Activated CD4-positive, alpha-beta T cell treated with anti-CD3 and anti-CD28 coated beads for 36 hours (primary cell): ENCODE measurements at regions of chr16 and their contacts with region 1.

Region 1: GRCh38 chr16:67806428-67807147 is at the starts of genes RANBP10 and TSNAXIP1:
- DNase-seq: peak; percentile 98
- ATAC-seq: peak; percentile 96
- H3K4me3 Mint-ChIP-seq: peak within 1 kb of the TSS; percentile 91
- H3K27ac Mint-ChIP-seq: peak within 1 kb of the TSS; percentile 91
- H3K4me1 Mint-ChIP-seq: peaks cover 39% of the 10 kb centered on the region
- H3K27me3 Mint-ChIP-seq: no peaks in the 10 kb centered on the region
- total RNA-seq, gene RANBP10: 15.6 to 18.0 TPM
- total RNA-seq, gene TSNAXIP1: 0.62 to 1.1 TPM

Region 2: GRCh38 chr16:67833418-67834241 is 27.0 kb after region 1 on chr16:
- CTCF ChIA-PET with region 1: interaction called, 4 read pairs
- POLR2A ChIA-PET with region 1: interaction called, 9 read pairs
- intact Hi-C with region 1: loop called (anchors 1 kb)
- DNase-seq: peak; percentile 97
- ATAC-seq: peak; percentile 100
- H3K4me3 Mint-ChIP-seq: peak overlapping the region; percentile 87
- H3K27ac Mint-ChIP-seq: peak overlapping the region; percentile 78
- H3K4me1 Mint-ChIP-seq: peaks cover 9% of the 10 kb centered on the region
- H3K27me3 Mint-ChIP-seq: no peaks in the 10 kb centered on the region

Region 3: GRCh38 chr16:67892899-67893742 is 86.5 kb after region 1 on chr16 and contains the start of gene PSKH1:
- CTCF ChIA-PET with region 1: no interaction called
- POLR2A ChIA-PET with region 1: no interaction called
- intact Hi-C with region 1: loop called in 1 of 2 experiments (anchors 1 kb)
- DNase-seq: peak; percentile 97
- ATAC-seq: peak; percentile 99
- H3K4me3 Mint-ChIP-seq: peak within 1 kb of the TSS; percentile 92
- H3K27ac Mint-ChIP-seq: peak within 1 kb of the TSS; percentile 92
- H3K4me1 Mint-ChIP-seq: peaks cover 30% of the 10 kb centered on the region
- H3K27me3 Mint-ChIP-seq: no peaks in the 10 kb centered on the region
- total RNA-seq, gene PSKH1: 11.7 to 11.9 TPM

Region 4: GRCh38 chr16:68022704-68023522 is 216.3 kb after region 1 on chr16 and contains the starts of genes DDX28 and DUS2:
- CTCF ChIA-PET with region 1: no interaction called
- POLR2A ChIA-PET with region 1: interaction called, 3 read pairs
- intact Hi-C with region 1: loop called in 1 of 2 experiments (anchors 2 kb)
- DNase-seq: peak; percentile 95
- ATAC-seq: peak; percentile 89
- H3K4me3 Mint-ChIP-seq: peak within 1 kb of the TSS; percentile 95
- H3K27ac Mint-ChIP-seq: peak within 1 kb of the TSS; percentile 97
- H3K4me1 Mint-ChIP-seq: peaks cover 23% of the 10 kb centered on the region
- H3K27me3 Mint-ChIP-seq: no peaks in the 10 kb centered on the region
- total RNA-seq, gene DDX28: 13.7 to 17.1 TPM
- total RNA-seq, gene DUS2: 29.5 to 33.1 TPM

Region 5: DNA sequence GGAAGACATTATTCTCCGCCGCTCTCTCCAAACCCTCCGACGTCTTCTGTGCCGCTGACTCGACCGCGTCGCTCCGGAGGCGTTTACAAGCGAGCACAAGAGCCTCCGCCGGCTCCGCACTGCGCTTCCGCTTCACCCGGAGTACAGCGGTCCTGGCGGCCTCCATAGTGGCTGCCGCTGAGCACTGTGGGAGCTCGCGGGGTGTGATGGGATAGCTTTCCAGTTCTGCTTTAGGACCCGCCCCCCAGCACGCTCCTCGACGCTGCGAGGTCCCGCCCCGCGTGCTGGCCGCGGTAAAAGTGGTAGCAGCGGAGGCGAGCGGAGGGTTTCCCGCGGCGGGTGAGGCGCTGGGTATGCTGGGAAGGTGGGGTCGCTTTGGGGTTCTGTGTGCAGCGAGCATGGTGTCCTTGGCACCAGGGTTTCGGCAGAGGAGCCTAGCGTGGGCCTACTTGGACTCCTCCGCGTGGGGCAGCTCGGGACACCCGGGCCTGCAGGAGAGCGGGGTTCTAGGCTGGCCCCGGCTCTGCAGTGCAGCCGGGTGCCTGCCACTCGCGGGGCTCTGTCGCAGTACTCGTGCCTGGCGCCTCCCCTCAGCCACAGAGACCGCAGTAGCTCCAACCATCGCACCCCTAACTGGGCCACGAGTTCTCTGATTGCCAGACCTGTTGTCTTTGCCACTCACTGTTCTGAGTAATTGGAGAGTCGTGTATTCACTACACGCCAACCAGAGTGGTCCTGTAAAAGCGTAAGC is 504.3 kb after region 1 on chr16 and contains the starts of genes PRMT7 and SLC7A6OS:
- CTCF ChIA-PET with region 1: no interaction called
- POLR2A ChIA-PET with region 1: no interaction called
- intact Hi-C with region 1: loop called in 1 of 2 experiments (anchors 2 kb)
- DNase-seq: peak; percentile 97
- ATAC-seq: peak; percentile 99
- H3K4me3 Mint-ChIP-seq: peak within 1 kb of the TSS; percentile 90
- H3K27ac Mint-ChIP-seq: peak within 1 kb of the TSS; percentile 92
- H3K4me1 Mint-ChIP-seq: peaks cover 42% of the 10 kb centered on the region
- H3K27me3 Mint-ChIP-seq: no peaks in the 10 kb centered on the region
- total RNA-seq, gene PRMT7: 62.7 to 70.7 TPM
- total RNA-seq, gene SLC7A6OS: 17.4 to 21.7 TPM